WTC11 (cell line): ENCODE measurements at regions of chr10 and their contacts with region 1.

Region 1: DNA sequence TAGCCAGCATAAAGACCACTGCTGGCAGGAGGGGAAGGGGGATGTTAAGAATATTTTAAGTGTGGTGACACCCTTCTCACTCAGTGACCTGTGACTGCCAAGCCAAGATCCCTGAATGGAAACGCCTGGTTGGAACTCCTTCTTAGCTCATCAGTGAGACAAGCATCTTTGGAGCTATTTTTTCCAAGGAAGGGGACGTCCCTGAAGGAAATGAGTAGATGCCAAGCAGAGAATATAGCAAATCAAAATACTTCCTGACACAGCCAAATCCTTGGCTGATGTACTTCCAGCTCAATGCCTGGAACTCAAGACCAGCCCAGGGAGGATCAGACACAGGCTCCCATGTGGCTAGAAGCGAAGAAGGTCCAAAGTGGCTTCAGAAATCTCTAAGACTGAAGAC is 82.2 kb downstream of the SORBS1 start:
- DNase-seq: no peak
- ATAC-seq: no peak
- H3K4me3 Mint-ChIP-seq: no peak overlapping the region
- H3K27ac Mint-ChIP-seq: no peak overlapping the region
- H3K4me1 Mint-ChIP-seq: peaks cover 69% of the 10 kb centered on the region
- H3K27me3 Mint-ChIP-seq: no peaks in the 10 kb centered on the region
- CTCF ChIP-seq: no peak

Region 2: DNA sequence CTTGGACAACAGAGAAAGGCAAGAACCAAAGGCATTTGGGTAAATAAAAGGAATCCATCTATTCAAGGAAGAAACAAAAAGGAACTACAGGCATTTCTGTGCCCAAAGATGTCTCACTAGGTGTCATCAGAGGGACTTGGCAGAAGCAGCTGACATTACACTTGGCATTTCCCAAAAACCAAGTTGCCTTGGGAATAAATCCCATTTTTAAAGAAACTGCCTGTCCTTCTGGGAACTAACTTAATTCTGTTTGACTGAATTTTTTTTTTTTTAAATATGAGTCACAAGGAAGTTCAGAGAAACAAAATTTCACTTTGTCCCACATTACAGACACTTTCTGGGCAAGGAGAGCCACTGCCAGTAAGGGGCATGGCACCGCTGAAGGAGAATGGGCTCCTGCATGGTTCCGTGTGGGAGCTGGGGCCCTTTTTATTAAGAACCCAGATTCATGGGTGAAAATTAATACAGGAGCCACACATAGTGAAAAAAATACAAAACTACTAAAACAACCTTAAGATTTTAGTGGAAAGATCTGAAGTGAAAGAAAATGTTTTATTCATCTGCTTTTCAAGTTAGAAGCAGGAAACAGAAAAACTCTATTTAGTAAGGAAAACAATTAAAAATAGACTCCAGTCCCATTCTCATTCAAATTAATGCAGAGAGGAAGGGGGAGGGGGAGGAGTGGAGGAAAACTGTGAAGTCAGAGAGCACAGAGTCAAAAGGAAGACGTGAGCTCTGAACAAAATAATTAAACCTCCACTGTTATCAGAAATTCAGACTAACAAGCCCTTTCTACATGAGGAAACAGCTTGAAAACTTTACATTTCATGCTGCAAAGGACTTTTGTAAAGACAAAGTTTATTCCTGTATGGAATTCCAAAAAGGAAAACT is 69.7 kb before region 1 on chr10:
- CTCF ChIA-PET with region 1: no interaction called
- POLR2A ChIA-PET with region 1: no interaction called
- DNase-seq: no peak
- ATAC-seq: peak; percentile 12
- H3K4me3 Mint-ChIP-seq: peak overlapping the region; percentile 48
- H3K27ac Mint-ChIP-seq: peak overlapping the region; percentile 92
- H3K4me1 Mint-ChIP-seq: peaks cover 43% of the 10 kb centered on the region
- H3K27me3 Mint-ChIP-seq: no peaks in the 10 kb centered on the region
- CTCF ChIP-seq: no peak

Region 3: DNA sequence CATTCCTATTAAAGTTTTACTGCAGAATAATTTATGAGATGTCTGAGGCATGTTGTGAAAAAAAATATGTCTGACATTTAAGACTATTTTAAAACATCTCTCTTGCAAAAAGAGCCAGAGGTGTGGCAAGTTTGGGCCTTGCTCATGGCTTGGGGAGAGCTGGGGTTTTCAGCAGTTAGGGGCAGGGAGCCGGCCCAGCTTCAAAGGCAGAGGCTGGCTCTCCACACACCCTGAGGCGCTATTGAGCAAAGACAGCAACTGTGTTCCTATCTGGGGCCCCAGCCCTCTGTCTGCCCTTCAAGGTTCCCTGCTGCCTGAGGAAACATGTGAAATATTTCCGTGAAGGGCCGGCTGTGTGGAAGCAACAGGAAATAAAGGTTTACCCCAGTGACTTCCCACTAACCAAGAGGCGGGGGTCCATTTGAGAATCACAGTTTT is 11.8 kb before region 1 on chr10:
- CTCF ChIA-PET with region 1: interaction called, 10 read pairs
- POLR2A ChIA-PET with region 1: no interaction called
- DNase-seq: peak; percentile 77
- ATAC-seq: peak; percentile 94
- H3K4me3 Mint-ChIP-seq: 0 out of 2 replicates have a peak overlapping the region, but pooled peaks have one; percentile 37
- H3K27ac Mint-ChIP-seq: peak overlapping the region; percentile 96
- H3K4me1 Mint-ChIP-seq: peaks cover 79% of the 10 kb centered on the region
- H3K27me3 Mint-ChIP-seq: no peaks in the 10 kb centered on the region
- CTCF ChIP-seq: no peak

Region 4: DNA sequence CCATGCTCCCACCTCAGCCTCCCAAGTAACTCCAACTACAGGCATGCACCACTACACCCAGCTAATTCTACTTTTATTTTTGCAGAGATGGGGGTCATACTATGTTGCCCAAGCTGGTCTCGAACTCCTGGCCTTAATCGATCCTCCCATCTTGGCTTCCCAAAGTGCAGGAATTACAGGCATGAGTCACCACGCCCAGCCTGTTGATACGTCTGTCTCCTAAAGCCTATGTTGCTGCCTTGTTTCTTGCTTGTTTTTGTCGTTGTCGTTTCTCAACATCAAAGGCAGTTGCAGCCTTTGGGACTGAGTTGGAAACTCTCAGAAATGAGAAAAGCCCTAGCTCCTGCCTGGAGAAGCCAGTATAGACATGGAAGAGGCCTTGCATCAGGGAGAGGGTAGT is 32.4 kb after region 1 on chr10:
- CTCF ChIA-PET with region 1: no interaction called
- POLR2A ChIA-PET with region 1: no interaction called
- DNase-seq: no peak
- ATAC-seq: no peak
- H3K4me3 Mint-ChIP-seq: no peak overlapping the region
- H3K27ac Mint-ChIP-seq: no peak overlapping the region; the same call in 1 of the 2 replicates
- H3K4me1 Mint-ChIP-seq: peaks cover 56% of the 10 kb centered on the region
- H3K27me3 Mint-ChIP-seq: no peaks in the 10 kb centered on the region
- CTCF ChIP-seq: no peak